Activated CD4-positive, alpha-beta T cell treated with anti-CD3 and anti-CD28 coated beads for 36 hours (primary cell): ENCODE measurements at regions of chr9 and their contacts with region 1.

Region 1: DNA sequence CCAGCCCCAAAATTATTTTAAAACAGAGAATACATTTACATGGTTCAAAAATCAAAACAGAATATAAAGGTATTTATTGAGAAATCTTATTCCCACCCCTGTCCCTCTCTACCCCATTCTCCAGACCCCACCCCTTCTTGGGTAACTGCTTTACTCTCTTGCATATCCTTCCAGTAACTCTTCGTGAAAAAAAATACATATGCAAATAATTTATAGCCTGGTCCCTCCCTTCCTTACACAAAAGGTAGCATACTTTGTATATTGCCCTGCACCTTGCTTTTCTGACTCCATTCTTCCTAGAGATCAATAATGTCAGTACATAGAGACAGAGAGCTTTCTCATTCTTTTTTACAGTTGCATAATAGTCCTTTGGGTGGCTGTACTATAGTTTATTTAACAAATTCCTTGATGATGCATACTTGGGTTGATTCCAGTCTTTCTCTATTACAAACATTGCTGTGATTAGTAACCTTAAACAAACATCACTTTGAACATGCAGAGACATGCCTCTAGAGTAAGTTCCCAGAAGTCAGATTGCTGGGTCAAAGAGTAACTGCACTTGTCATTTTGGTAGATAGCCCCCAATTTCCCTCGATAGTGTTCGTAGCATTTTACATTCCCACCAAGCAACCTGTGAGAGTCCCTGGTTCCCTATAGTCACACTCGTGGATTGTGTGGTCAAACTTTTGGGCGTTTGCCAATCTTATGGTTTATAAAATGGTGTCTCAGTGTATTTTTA is 47.8 kb downstream of the STOM start:
- DNase-seq: no peak
- ATAC-seq: peak; percentile 37
- H3K4me3 Mint-ChIP-seq: no peak overlapping the region
- H3K27ac Mint-ChIP-seq: no peak overlapping the region
- H3K4me1 Mint-ChIP-seq: peaks cover 12% of the 10 kb centered on the region
- H3K27me3 Mint-ChIP-seq: no peaks in the 10 kb centered on the region

Region 2: DNA sequence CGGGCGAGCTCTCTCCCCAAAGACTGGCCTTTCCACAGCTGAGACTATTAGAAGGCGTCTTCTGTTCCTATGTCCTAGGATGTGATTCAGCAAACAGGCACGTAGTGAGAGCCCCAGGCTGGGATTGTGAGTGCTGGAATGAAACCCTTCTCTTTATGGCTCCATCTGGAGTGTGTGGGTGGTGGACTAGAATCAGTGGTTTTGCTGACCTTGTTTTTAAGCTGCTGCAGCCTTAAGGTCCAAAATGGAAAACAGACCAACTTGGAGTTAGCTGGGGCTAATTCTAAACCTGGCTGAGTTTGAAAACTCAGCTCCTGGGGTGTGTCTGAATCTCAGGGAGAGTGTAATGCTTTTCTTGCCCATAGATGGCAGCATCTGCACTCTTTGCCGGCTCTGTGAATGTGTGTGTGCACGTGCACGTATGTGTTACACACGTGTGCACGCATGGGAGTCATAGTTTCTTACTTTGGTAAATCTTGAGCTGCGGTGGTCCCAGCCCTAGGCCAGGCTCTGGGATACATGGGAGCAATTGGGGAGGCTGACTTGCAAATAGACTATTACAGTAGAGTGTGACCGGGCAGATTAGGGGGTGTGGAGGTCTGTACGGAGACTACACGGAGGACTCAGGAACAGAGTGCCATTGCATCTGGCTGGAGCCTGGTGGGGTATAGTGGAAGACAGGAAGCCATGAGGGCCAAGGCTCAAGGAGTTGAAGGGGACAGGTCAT is 43.5 kb before region 1 on chr9:
- CTCF ChIA-PET with region 1: interaction called, 14 read pairs
- POLR2A ChIA-PET with region 1: no interaction called
- intact Hi-C with region 1: loop called in 1 of 2 experiments (anchors 1 kb)
- DNase-seq: peak; percentile 76
- ATAC-seq: peak; percentile 96
- H3K4me3 Mint-ChIP-seq: no peak overlapping the region
- H3K27ac Mint-ChIP-seq: no peak overlapping the region
- H3K4me1 Mint-ChIP-seq: peaks cover 11% of the 10 kb centered on the region
- H3K27me3 Mint-ChIP-seq: peaks cover 3% of the 10 kb centered on the region

Region 3: GRCh38 chr9:121340676-121341392 is 18.6 kb after region 1 on chr9:
- CTCF ChIA-PET with region 1: interaction called, 22 read pairs
- POLR2A ChIA-PET with region 1: no interaction called
- intact Hi-C with region 1: no loop called
- DNase-seq: no peak
- ATAC-seq: peak; percentile 30
- H3K4me3 Mint-ChIP-seq: no peak overlapping the region
- H3K27ac Mint-ChIP-seq: no peak overlapping the region
- H3K4me1 Mint-ChIP-seq: peaks cover 2% of the 10 kb centered on the region
- H3K27me3 Mint-ChIP-seq: no peaks in the 10 kb centered on the region

Region 4: GRCh38 chr9:121369595-121370265 is 47.5 kb after region 1 on chr9 and contains the start of gene STOM:
- CTCF ChIA-PET with region 1: interaction called, 22 read pairs
- POLR2A ChIA-PET with region 1: no interaction called
- intact Hi-C with region 1: loop called in 1 of 2 experiments (anchors 1 kb)
- DNase-seq: peak; percentile 81
- ATAC-seq: peak; percentile 57
- H3K4me3 Mint-ChIP-seq: peak within 1 kb of the TSS; percentile 76
- H3K27ac Mint-ChIP-seq: peak within 1 kb of the TSS; percentile 95
- H3K4me1 Mint-ChIP-seq: peaks cover 27% of the 10 kb centered on the region
- H3K27me3 Mint-ChIP-seq: no peaks in the 10 kb centered on the region
- total RNA-seq, gene STOM: 34.7 to 44.5 TPM

Region 5: DNA sequence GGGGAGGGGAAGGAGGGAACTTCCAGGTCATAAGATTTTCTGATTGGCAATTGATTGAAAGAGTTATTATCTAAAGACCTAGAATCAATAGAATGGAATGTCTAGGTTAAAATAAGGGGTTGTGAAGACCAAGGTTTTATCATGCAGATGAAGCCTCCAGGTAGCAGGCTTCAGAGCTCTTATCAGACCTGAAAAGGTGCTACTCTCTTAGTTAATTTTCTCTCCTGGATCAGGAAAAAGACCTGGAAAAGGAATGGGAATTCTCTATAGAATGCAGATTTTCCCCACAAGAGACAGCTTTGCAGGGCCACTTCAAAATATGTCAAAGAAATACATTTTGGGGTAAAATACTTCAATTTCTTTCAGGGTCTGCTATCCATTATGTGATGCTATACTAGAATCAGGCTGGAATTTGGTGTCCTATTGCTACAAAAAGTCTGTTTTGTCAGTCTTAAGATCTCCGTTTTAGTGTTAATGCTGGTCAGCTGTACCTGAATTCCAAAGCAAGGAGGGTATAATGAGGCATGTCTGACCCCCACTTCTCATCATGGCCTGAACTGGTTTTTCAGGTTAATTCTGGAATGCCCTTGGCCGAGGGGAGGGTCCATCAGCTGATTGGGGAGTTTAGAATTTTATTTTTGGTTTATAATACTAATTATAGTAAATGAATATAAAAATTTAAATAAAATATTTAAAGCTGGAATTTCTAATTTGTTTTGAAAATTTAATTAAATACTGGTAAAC is 64.4 kb after region 1 on chr9:
- CTCF ChIA-PET with region 1: interaction called, 13 read pairs
- POLR2A ChIA-PET with region 1: no interaction called
- intact Hi-C with region 1: no loop called
- DNase-seq: no peak
- ATAC-seq: no peak
- H3K4me3 Mint-ChIP-seq: no peak overlapping the region
- H3K27ac Mint-ChIP-seq: no peak overlapping the region
- H3K4me1 Mint-ChIP-seq: no peaks in the 10 kb centered on the region
- H3K27me3 Mint-ChIP-seq: peaks cover 2% of the 10 kb centered on the region

Region 6: DNA sequence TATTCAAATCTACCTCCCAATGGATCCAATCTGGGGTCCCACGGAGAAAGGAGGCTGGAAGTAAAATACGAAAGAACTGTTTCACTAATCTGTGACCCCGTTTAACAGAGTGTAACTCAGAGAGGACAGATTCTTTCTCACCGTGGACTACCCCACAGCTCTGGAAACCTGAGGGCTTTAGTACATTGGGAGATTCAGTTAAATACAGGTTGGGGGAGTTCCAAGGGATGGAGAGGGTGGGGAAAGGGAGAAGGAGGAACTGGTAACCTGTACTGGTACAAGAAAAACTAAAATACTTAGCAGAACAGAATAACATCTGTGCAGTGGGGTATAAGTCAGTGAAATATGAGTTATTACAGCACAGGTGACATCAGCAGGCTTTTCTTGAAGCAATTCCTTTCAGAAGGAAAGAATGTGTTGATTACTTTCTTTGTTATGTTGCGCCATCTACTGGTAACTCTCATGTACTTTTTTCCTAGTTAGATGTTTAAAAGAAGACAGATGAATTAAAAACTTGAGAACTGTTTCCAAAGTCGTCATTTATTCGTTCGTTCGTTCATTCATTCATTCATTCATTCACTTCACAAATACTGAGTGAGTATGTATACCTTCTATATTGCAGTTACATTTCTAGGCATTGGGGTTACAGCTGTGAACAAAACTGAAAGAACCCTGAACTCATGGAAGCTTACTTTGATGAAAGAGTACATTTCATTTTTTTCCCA is 77.8 kb after region 1 on chr9:
- CTCF ChIA-PET with region 1: interaction called, 276 read pairs
- POLR2A ChIA-PET with region 1: no interaction called
- intact Hi-C with region 1: loop called (anchors 1 kb)
- DNase-seq: no peak
- ATAC-seq: peak; percentile 75
- H3K4me3 Mint-ChIP-seq: no peak overlapping the region
- H3K27ac Mint-ChIP-seq: no peak overlapping the region
- H3K4me1 Mint-ChIP-seq: no peaks in the 10 kb centered on the region
- H3K27me3 Mint-ChIP-seq: no peaks in the 10 kb centered on the region

Region 7: GRCh38 chr9:121837113-121837961 is 515.1 kb after region 1 on chr9:
- CTCF ChIA-PET with region 1: no interaction called
- POLR2A ChIA-PET with region 1: no interaction called
- intact Hi-C with region 1: no loop called
- DNase-seq: no peak
- ATAC-seq: no peak
- H3K4me3 Mint-ChIP-seq: no peak overlapping the region
- H3K27ac Mint-ChIP-seq: no peak overlapping the region
- H3K4me1 Mint-ChIP-seq: peaks cover 13% of the 10 kb centered on the region
- H3K27me3 Mint-ChIP-seq: no peaks in the 10 kb centered on the region